ENCODE measurements at regions of chr12 and their contacts with region 1.

Region 1: DNA sequence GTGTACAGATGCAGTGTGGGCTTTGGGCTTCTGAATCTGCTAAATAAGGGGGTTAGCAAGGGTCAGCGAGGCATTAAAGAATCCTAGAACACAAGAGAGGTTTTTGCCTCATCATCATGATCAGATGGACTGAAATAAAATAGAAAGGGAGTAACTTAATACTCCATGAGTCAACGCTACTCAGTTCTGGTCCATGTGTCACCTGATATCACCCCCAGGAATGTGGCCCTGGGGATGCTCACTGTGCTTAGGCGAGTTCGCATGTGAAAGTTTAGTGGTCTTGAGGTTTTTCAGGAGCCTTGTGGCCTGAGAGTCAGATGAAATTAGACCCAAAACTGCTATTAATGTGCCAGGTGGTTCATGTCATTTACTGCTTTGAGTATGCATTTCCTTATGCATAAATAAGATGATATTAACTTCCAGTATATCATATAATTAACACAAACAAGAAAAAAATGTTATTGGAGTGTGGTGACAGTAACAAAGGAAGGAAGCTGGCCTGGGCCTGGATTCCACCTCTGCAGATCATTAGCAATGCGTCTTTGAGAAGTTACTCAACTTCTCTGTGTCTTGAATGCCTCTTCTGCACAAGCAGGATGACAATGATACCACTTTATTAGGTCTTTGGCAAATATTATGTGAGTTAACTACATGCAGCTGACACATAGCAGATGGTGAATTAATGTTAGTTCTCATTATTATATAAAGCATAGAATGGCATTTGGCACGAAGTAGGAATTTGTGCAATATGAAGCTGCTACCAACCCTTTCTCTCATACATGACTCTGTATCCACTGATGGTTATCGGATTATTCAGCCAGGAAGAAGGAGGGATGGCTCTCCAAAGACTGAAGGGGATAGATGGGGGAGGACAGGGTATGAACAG is 1272.6 kb downstream of the AACS start:
- DNase-seq: peak; percentile 71 to 74
- H3K4me3 ChIP-seq: no peak overlapping the region
- H3K27ac ChIP-seq: peak overlapping the region; percentile 93
- H3K4me1 ChIP-seq: peaks cover 32% of the 10 kb centered on the region
- H3K27me3 ChIP-seq: no peaks in the 10 kb centered on the region
- CTCF ChIP-seq: no peak

Region 2: GRCh38 chr12:125049093-125049458 is 1288.7 kb before region 1 on chr12:
- CTCF ChIA-PET with region 1: no interaction called
- POLR2A ChIA-PET with region 1: no interaction called
- intact Hi-C with region 1: no loop called
- DNase-seq: no peak
- H3K4me3 ChIP-seq: peak overlapping the region; percentile 49; the same call in 1 of the 2 replicates
- H3K27ac ChIP-seq: no peak overlapping the region
- H3K4me1 ChIP-seq: no peaks in the 10 kb centered on the region
- H3K27me3 ChIP-seq: no peaks in the 10 kb centered on the region
- CTCF ChIP-seq: no peak

Region 3: DNA sequence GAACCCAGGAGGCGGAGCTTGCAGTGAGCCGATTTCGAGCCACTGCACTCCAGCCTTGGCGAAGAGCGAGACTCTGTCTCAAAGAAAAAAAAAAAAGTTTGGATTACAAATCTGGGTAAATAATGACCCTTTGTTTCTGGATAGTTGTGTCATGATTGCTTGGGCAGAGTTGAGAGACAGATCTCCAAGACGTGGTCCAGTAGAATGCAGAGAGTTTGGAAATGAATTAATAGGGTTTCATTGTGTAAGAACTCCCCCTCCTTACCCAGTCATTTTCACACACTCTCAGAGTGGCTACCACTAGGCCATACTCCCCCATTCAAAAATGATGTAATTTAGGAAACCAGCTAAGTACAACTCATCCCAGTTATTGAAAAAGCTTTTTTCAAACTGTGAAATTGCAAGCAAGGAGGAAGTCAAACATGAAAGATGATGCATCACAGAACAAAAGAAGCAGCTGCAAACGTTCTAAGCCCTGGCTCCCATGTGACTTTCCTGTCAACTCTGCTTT is 59.3 kb after region 1 on chr12:
- CTCF ChIA-PET with region 1: no interaction called
- POLR2A ChIA-PET with region 1: no interaction called
- intact Hi-C with region 1: loop called (anchors 2 kb)
- DNase-seq: no peak
- H3K4me3 ChIP-seq: no peak overlapping the region
- H3K27ac ChIP-seq: no peak overlapping the region
- H3K4me1 ChIP-seq: no peaks in the 10 kb centered on the region
- H3K27me3 ChIP-seq: no peaks in the 10 kb centered on the region
- CTCF ChIP-seq: no peak

Region 4: GRCh38 chr12:126582231-126582630 is 244.4 kb after region 1 on chr12:
- CTCF ChIA-PET with region 1: no interaction called
- POLR2A ChIA-PET with region 1: no interaction called
- intact Hi-C with region 1: loop called (anchors 5 kb)
- DNase-seq: peak; percentile 45 to 48
- H3K4me3 ChIP-seq: no peak overlapping the region
- H3K27ac ChIP-seq: no peak overlapping the region
- H3K4me1 ChIP-seq: 0 out of 2 replicates have a peak, but pooled peaks cover 4% of the 10 kb centered on the region
- H3K27me3 ChIP-seq: no peaks in the 10 kb centered on the region
- CTCF ChIP-seq: no peak

Measured in PC-9 (cell line).